MCF 10A (cell line): ENCODE measurements at regions of chr9 and their contacts with region 1.

Region 1: DNA sequence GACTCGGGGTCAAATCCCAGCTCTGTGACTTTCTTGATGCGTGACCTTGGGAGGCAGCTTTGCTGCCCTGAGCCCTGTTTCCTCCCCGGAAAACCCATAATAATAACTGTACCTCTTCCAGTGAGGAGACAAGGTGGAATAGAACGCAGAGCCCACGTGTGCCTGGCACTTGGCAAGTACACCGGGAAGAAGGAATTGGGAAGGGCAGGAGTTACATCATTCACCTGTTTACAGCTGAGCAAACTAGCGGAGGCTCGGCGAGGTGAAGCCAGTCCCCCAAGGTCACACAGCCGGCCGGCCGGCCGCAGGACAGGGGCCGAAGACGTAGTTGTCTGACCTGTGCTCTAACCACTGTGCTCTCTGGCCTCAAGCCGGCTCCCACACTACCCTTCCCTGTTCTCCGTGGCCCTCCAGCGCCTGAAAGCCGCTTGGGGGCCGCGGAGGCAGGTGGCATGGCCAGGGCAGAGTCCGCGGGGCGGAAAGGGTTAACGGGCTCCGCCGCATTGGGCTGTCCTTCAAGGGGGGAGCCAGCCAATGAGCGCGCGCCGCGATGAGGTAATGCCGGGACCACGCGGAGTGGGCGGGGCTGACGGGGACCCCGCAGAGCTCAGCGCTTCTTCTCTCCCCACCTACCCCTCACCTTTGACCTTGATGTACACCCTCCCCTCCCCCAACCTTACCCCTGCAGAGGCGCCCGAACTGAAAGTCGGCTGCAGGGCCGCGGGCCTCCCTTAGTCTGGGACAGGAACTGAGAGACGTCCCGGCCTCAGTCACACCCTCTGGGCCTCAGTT is 125.2 kb downstream of the C9orf50 start:
- DNase-seq: peak; percentile 91
- H3K4me3 Mint-ChIP-seq: peak overlapping the region; percentile 76
- H3K27ac Mint-ChIP-seq: peak overlapping the region; percentile 66
- H3K4me1 Mint-ChIP-seq: peaks cover 49% of the 10 kb centered on the region
- H3K27me3 Mint-ChIP-seq: no peaks in the 10 kb centered on the region
- CTCF ChIP-seq: no peak

Region 2: GRCh38 chr9:129166623-129167557 is 328.8 kb before region 1 on chr9:
- CTCF ChIA-PET with region 1: interaction called, 35 read pairs
- POLR2A ChIA-PET with region 1: interaction called, 11 read pairs
- intact Hi-C with region 1: no loop called
- DNase-seq: peak; percentile 81
- H3K4me3 Mint-ChIP-seq: peak overlapping the region; percentile 63
- H3K27ac Mint-ChIP-seq: peak overlapping the region; percentile 87
- H3K4me1 Mint-ChIP-seq: peaks cover 25% of the 10 kb centered on the region
- H3K27me3 Mint-ChIP-seq: no peaks in the 10 kb centered on the region
- CTCF ChIP-seq: no peak

Region 3: GRCh38 chr9:129460323-129461261 is 35.1 kb before region 1 on chr9:
- CTCF ChIA-PET with region 1: no interaction called
- POLR2A ChIA-PET with region 1: interaction called, 23 read pairs
- intact Hi-C with region 1: no loop called
- DNase-seq: peak; percentile 97
- H3K4me3 Mint-ChIP-seq: peak overlapping the region; percentile 64
- H3K27ac Mint-ChIP-seq: peak overlapping the region; percentile 86
- H3K4me1 Mint-ChIP-seq: peaks cover 7% of the 10 kb centered on the region
- H3K27me3 Mint-ChIP-seq: no peaks in the 10 kb centered on the region
- CTCF ChIP-seq: no peak

Region 4: DNA sequence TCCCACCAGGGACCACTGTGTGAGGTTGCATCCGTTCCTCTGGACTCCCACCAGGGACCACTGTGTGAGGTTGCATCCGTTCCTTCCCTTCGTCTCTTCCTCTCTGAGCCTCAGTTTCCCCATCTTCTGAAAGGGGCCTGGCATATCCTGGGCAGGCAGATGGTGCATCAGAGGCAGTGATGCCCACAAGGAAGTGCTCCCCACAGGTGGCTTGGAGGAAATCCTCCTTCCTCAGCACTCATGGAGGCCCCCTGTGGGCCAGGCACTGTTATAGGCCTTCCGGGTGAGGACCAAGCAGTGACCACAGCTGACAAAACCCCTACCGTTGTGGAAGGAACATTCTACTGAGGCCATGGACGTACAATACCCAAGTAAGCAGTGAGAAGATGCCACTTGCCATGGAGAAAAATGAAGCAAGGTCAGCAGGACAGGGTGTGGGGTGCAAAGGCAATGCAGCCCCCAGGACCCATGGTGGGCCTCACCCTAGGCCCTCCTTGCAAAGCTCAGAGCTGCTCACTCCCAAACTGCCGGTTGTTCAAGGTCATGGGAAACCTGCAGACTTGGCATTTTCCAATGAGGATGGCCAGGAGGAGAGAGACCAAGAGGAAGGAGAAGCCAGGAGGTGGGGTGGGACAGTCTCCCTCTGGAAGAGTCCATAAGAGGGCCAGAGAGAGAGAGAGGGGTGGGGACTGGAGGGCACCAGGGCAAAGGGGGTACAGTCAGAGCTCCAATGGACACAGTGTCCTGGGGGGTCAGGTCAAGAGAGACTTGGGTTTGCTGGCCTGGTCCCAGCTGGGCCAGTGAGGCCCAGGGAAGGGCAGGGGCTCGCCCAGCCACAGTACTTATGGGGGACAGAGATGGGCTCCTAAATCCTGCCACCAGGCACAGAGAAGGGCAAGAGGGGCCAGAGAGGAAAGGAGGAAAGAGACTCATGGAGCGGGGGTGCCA is 74.0 kb after region 1 on chr9:
- CTCF ChIA-PET with region 1: no interaction called
- POLR2A ChIA-PET with region 1: no interaction called
- intact Hi-C with region 1: loop called (anchors 5 kb)
- DNase-seq: peak; percentile 44
- H3K4me3 Mint-ChIP-seq: peak overlapping the region; percentile 59
- H3K27ac Mint-ChIP-seq: peak overlapping the region; percentile 96
- H3K4me1 Mint-ChIP-seq: peaks cover 25% of the 10 kb centered on the region
- H3K27me3 Mint-ChIP-seq: no peaks in the 10 kb centered on the region
- CTCF ChIP-seq: no peak